Heart right ventricle (tissue), 16 donors: ENCODE measurements at regions of chr16 and their contacts with region 1.

Region 1: DNA sequence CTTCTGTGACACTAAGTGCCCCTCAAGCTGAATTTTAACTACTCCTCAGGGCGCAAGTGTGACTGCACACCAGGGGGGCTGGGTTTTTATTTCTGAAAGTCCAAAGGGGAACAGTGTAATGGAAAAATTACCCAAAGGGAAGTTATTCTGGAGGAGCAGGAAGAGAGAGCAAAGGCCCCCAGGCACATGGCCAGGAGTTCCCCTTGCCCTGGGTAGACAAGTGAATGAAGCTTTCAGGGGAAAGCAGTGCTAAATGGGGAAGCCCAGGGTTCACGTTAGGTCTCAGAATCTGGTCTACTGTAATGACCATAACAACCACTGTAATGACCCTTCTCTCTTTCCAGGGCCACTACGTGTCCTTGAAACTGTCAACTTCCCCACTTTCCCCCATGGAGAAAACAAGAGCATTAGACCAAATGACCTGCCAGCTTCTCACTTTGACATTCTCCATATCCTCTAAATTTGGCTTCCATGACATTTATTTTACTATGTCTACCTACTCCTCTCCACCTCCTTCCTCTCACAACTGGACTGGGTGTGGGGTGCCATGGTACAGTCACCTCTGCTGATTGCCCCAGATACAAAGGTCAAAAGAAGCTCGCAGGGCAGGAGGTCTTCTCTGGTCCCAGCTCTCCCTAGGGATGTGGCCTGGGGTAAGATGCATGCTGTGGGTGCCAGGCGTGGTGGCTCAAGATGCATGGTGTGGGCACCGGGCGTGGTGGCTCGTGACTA is 34.1 kb upstream of the MMP2 start:
- DNase-seq: peak; percentile 40 to 43
- ATAC-seq: peak; percentile 48 to 93 (median 80)
- H3K4me3 ChIP-seq: peak overlapping the region in 2 of 10 donors; percentile 13 to 26
- H3K27ac ChIP-seq: peak overlapping the region in 1 of 10 donors; percentile 21
- H3K4me1 ChIP-seq: peaks cover 0 to 21% (median 7%) of the 10 kb centered on the region in 9 donors
- H3K27me3 ChIP-seq: no peaks in the 10 kb centered on the region
- CTCF ChIP-seq: no peak

Region 2: GRCh38 chr16:55408666-55409065 is 36.3 kb before region 1 on chr16:
- intact Hi-C with region 1: loop called in 1 of 10 experiments (anchors 1 kb)
- DNase-seq: no peak
- ATAC-seq: no peak
- H3K4me3 ChIP-seq: no peak overlapping the region
- H3K27ac ChIP-seq: no peak overlapping the region
- H3K4me1 ChIP-seq: peaks cover 0 to 4% (median 0%) of the 10 kb centered on the region in 9 donors
- H3K27me3 ChIP-seq: peaks cover 0 to 10% (median 0%) of the 10 kb centered on the region in 7 donors
- CTCF ChIP-seq: no peak

Region 3: DNA sequence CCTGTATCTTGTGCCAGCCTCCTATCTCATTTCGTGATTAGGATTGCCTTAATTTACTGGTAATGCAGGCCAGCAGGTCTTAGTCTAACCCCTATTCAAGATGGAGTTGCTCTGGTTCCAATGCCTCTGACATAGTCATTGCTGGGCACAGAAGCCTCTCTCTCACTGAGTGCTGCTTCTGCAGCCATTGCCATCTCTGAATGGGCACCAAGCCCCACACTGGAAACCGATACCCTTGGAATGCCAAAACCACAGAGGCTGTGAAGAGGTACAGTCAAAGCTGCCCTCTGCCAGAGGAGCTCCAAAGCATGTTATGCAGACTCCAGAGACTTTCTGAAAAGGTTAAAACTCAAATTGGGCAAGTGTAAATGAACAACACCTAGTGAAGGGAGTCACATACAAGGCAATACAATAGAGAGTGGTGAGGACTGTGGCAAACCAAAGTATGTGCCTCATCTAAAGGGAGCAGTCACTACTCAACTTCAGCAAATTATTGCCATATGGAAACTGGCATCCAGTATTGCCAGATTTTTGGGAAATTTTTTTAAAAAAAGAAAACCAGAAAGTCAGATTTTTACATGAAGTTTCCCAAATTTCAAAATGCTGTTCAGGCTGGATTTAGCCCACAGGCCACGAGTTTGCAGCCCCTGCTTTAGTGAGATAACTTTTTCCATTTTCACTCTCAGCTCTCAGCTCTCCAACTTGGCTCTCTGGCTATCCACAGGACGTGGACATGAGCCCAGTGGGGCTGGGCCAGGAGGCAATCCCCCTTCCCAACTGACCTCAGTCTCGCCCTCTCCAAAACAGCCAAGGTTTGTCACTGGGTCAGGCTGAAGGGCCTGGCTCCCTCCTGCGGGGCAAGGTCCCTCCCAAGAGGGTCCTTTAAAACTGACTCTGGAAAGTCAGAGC is 32.0 kb after region 1 on chr16:
- intact Hi-C with region 1: loop called in 1 of 10 experiments (anchors 1 kb)
- DNase-seq: peak; percentile 66 to 67
- ATAC-seq: peak; percentile 19 to 58 (median 44)
- H3K4me3 ChIP-seq: no peak overlapping the region
- H3K27ac ChIP-seq: peak overlapping the region in 9 of 10 donors; percentile 45 to 92 (median 83)
- H3K4me1 ChIP-seq: peaks cover 0 to 52% (median 21%) of the 10 kb centered on the region in 9 donors
- H3K27me3 ChIP-seq: peaks cover 0 to 41% (median 4%) of the 10 kb centered on the region in 7 donors
- CTCF ChIP-seq: no peak

Region 4: DNA sequence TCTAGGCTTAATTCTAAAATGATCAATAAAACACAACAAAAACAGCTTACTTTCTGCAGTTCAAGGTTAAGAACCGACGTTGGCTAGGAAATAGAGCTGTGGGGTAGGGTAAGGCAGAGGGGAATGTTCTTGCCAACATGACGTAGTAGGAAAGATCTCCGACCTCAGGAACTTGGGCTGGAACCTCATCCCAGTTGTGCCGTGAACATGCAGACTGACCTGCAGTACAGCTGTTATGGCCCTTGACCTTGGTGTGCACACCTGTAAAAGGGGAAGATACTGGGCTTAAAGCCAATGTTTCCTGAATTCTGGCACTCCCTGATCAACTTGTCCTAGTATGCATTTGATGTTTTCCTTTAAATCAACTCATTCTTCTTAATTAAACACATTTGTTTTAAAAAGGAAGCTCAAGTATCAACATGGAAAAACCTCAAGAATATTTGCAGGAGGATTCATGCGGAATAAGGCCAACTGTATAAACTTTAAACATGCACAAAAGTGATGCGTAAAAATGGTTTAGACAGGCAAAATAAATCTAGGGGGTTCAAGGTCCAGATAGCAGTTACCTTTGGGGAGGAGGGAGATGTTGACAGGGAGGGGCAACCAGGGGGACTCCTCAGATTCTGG is 196.6 kb after region 1 on chr16:
- intact Hi-C with region 1: no loop called
- DNase-seq: no peak
- ATAC-seq: no peak
- H3K4me3 ChIP-seq: no peak overlapping the region
- H3K27ac ChIP-seq: no peak overlapping the region
- H3K4me1 ChIP-seq: no peaks in the 10 kb centered on the region
- H3K27me3 ChIP-seq: peaks cover 0 to 41% (median 10%) of the 10 kb centered on the region in 7 donors
- CTCF ChIP-seq: no peak